Left cardiac atrium (tissue), 4 donors: ENCODE measurements at regions of chr16 and their contacts with region 1.

Region 1: DNA sequence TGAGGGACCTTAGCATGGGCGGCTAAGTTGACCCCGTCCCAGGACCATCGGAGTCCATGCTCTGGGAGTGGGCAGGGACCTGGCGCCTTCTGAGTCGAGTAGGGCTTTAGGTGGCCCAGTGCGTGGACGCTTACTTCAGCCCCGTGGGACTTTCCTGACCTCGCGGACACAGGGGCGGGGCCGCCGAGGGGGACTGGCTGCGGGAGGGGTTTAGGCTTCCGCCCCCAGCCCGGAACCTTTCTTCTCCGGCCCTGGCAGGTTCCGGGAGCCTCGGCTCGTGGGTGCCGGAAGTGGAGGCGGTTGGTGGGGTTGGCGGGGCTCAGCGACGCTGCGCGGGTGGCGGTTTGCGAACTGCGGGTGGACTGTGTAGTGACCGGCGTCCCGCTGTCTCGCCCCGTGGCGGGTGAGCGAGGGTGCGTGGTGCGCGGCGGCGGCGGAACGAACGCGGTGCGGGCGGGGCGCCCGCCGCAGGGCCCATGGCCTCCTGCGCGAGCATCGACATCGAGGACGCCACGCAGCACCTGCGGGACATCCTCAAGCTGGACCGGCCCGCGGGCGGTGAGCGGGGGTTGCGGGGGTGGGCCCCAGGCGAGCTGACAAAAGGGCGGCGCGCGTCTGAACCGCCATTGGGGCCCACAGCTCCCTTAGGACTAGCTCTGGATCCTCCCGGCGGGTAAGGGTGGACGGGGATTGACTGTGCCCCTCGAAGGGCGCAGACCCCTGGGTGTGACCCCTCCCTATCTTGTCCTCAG is at the start of gene EDC4:
- DNase-seq: peak; percentile 88
- ATAC-seq: peak; percentile 93 to 95
- total RNA-seq, gene EDC4: 23.3 to 31.5 TPM

Region 2: DNA sequence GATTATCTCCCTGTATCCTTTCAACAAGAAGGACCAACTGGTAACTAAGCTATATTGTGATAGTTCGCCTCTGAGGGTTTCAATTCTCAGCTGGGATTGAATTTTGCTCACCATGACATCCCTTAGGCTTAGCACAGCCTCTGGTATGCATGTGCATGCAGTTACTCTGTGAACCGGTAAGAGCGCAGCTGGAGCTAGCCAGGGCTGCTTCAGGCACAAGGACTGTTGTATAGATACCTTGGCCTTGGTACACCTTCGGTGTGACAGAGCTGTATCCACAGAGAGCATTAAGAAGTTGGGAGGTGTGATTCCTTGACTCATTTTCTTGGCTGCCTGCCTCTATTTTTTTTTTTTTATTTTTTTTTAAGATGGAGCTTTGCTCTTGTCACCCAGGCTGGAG is 28.5 kb before region 1 on chr16:
- intact Hi-C with region 1: loop called in 1 of 2 experiments (anchors 2 kb)
- DNase-seq: no peak
- ATAC-seq: no peak

Region 3: GRCh38 chr16:67942200-67942509 is 69.2 kb after region 1 on chr16:
- intact Hi-C with region 1: no loop called
- DNase-seq: no peak
- ATAC-seq: peak; percentile 5 to 14